Activated T-helper 1 cell treated with anti-CD3 and anti-CD28 coated beads, Interleukin-12 subunit alpha, Interleukin-12 subunit beta, Interleukin-2, Interleukin-4 antibody, amounts not matched to agents 30 ng/mL and 10 ng/mL and 1 ng/mL, durations not matched to agents 14 hours and 24 hours and 36 hours (primary cell): ENCODE measurements at regions of chr6 and their contacts with region 1.

Region 1: DNA sequence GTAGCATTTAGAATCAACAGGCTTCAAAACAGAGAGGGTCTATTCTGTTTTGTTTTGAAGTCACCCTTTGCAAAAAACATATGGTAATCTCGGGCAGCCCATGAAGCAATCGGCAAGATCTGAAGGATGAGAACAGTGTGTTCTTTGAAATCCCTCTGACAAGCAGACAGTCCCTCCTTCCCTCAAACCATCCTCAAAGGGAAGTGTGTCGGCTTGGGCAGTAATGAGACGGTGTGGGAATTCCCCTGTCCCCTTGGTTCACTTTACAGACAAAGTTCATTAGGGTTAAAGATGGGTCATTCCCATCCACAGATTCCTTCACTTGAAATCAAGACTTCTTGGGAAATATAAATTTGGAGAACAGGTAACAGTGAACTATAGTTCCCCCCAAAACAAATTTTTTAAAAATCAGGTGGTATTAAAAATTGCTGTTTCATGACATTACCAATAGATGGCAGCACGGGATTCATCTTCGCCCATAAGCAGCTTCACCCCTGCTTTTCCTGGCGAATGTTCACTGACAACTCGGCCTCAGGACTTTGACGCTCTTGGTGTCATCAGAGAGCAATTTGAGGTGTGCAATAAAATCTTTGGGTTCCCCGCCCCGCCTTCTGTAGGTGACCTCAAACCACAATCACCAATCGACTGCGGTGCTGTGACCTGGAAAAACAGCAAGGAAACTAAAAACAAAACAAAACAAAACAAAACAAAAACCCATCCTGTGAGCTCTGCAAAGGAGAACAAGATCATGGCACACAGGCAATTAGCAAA is 159.3 kb upstream of the TNFAIP3 start:
- DNase-seq: peak; percentile 89
- H3K4me3 Mint-ChIP-seq: peak overlapping the region; percentile 70
- H3K27ac Mint-ChIP-seq: peak overlapping the region; percentile 94
- H3K4me1 Mint-ChIP-seq: peaks cover 76% of the 10 kb centered on the region
- H3K27me3 Mint-ChIP-seq: no peaks in the 10 kb centered on the region

Region 2: DNA sequence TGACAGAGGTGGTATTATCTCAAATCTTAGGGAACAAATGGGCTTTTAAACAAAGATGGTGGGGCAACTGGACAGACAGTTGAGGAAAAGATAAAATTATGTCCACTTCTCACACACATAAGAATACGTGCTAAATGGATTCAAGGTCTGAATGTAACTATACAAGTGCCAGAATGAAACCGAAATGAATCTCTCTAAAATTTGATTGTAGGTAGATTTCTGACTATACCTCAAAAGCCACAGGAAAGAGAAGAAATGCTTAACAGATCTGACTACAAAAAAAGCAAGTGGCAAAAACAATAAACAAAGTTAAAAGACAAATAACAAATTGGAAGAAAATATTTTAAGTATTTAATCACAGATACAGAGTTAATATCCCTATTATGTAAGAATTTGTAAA is 30.9 kb before region 1 on chr6:
- intact Hi-C with region 1: loop called (anchors 1 kb)
- DNase-seq: no peak
- H3K4me3 Mint-ChIP-seq: peak overlapping the region; percentile 20
- H3K27ac Mint-ChIP-seq: peak overlapping the region; percentile 88
- H3K4me1 Mint-ChIP-seq: peaks cover 63% of the 10 kb centered on the region
- H3K27me3 Mint-ChIP-seq: peaks cover 3% of the 10 kb centered on the region

Region 3: GRCh38 chr6:137791281-137792159 is 83.7 kb after region 1 on chr6:
- intact Hi-C with region 1: loop called (anchors 1 kb)
- DNase-seq: no peak
- H3K4me3 Mint-ChIP-seq: peak overlapping the region; percentile 59
- H3K27ac Mint-ChIP-seq: peak overlapping the region; percentile 87
- H3K4me1 Mint-ChIP-seq: peaks cover 76% of the 10 kb centered on the region
- H3K27me3 Mint-ChIP-seq: no peaks in the 10 kb centered on the region

Region 4: DNA sequence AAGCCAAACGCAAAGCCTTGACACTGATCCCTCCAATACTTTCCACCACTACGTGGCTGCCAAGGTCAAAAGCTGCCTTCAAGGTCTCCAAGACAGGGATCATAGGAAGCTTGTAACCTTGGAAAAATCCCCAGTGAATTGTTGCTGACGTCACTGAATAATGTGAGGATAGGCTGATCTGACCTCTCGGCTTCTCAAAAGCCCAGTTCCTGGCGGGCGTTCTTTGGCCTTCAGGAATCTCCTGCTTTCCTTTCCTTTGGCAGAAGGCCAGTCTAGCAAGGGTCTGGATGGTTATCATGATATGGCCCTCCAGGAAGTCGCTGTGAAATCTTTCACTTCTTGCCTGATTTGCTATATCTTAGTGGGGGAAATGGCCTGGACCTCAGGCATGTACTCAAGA is 97.8 kb after region 1 on chr6:
- intact Hi-C with region 1: no loop called
- DNase-seq: no peak
- H3K4me3 Mint-ChIP-seq: no peak overlapping the region
- H3K27ac Mint-ChIP-seq: no peak overlapping the region
- H3K4me1 Mint-ChIP-seq: peaks cover 59% of the 10 kb centered on the region
- H3K27me3 Mint-ChIP-seq: no peaks in the 10 kb centered on the region

Region 5: GRCh38 chr6:137823826-137824555 is 116.2 kb after region 1 on chr6:
- intact Hi-C with region 1: loop called (anchors 1 kb)
- DNase-seq: peak; percentile 68
- H3K4me3 Mint-ChIP-seq: peak overlapping the region; percentile 71
- H3K27ac Mint-ChIP-seq: peak overlapping the region; percentile 98
- H3K4me1 Mint-ChIP-seq: peaks cover 88% of the 10 kb centered on the region
- H3K27me3 Mint-ChIP-seq: no peaks in the 10 kb centered on the region

Region 6: DNA sequence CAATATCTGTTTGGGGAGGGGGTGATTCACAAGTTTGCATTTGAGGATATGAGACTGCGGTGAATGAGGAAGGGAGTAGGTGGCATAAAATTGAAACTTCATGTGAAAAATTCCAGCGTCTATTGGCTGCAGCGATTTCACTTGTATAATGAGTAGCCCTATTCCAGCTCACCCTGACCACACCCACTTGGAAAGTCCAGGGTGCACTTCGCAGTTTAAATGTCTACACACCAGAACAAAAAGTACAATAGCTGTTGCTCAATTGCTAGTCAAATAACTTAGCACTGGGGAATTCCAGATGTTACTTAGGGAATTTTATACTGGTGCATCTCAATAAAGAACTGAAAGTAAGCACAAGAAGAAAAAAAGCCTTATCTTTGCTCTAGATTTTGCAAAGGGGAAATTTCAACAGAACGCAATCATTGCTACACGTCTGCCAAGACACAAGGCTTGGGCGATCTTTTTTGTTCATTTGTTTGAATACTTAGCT is 165.5 kb after region 1 on chr6:
- intact Hi-C with region 1: loop called (anchors 1 kb)
- DNase-seq: peak; percentile 69
- H3K4me3 Mint-ChIP-seq: peak overlapping the region; percentile 98
- H3K27ac Mint-ChIP-seq: peak overlapping the region; percentile 99
- H3K4me1 Mint-ChIP-seq: peaks cover 66% of the 10 kb centered on the region
- H3K27me3 Mint-ChIP-seq: no peaks in the 10 kb centered on the region

Region 7: GRCh38 chr6:137944793-137945498 is 237.2 kb after region 1 on chr6:
- intact Hi-C with region 1: loop called (anchors 1 kb)
- DNase-seq: no peak
- H3K4me3 Mint-ChIP-seq: no peak overlapping the region
- H3K27ac Mint-ChIP-seq: peak overlapping the region; percentile 15
- H3K4me1 Mint-ChIP-seq: peaks cover 86% of the 10 kb centered on the region
- H3K27me3 Mint-ChIP-seq: no peaks in the 10 kb centered on the region

Region 8: GRCh38 chr6:138109042-138109997 is 401.5 kb after region 1 on chr6:
- intact Hi-C with region 1: loop called (anchors 1 kb)
- DNase-seq: peak; percentile 67
- H3K4me3 Mint-ChIP-seq: peak overlapping the region; percentile 62
- H3K27ac Mint-ChIP-seq: no peak overlapping the region
- H3K4me1 Mint-ChIP-seq: peaks cover 29% of the 10 kb centered on the region
- H3K27me3 Mint-ChIP-seq: peaks cover 28% of the 10 kb centered on the region